Gastrocnemius medialis (tissue), 4 donors: ENCODE measurements at regions of chr11 and their contacts with region 1.

Region 1: GRCh38 chr11:47715082-47715669 is at the start of gene AGBL2:
- DNase-seq: peak; percentile 9 to 46
- ATAC-seq: peak in 1 of 2 donors; percentile 68
- H3K4me3 ChIP-seq: peak within 1 kb of the TSS; percentile 61 to 82 (median 72)
- H3K27ac ChIP-seq: peak within 1 kb of the TSS; percentile 8 to 65 (median 52)
- H3K4me1 ChIP-seq: peaks cover 0 to 4% of the 10 kb centered on the region in 2 donors
- H3K27me3 ChIP-seq: no peaks in the 10 kb centered on the region
- CTCF ChIP-seq: no peak
- POLR2A ChIP-seq: no peak
- total RNA-seq, gene AGBL2: not detected

Region 2: DNA sequence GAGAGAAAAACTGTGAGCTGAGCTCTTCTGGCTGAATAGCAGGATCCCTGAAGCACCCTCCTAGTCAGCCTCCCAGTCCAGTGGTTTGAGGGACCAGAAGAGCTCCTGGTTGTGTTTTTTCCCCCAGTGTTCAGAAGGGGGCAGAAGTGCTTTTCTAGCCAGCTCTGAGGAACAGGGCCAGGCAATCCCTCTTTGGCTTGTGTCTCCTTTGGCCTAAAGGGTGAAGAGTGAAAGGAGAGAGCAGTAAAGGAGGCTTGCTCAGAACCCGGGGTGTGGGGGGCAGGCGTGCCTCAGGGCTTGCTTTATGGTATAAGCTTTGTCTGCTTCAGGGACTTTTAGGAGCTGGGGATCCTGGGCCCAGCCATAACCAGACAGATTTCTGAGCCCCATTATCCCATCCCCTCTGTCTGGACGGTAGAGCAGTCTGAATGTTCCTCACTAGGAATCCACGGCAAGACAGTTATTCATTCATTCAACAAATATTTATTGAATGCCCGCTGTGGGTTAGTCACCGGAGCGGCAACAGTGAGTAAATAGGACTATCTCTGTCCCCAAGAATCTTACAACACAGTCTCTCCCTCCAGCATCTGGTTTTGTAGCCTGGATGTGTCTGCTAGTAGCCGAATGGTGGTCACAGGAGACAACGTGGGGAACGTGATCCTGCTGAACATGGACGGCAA is 481.0 kb before region 1 on chr11:
- in situ Hi-C with region 1: no loop called
- intact Hi-C with region 1: no loop called
- DNase-seq: peak in 1 of 2 donors; percentile 34
- ATAC-seq: peak; percentile 50 to 63
- H3K4me3 ChIP-seq: no peak overlapping the region
- H3K27ac ChIP-seq: peak overlapping the region in 2 of 4 donors; percentile 23 to 48
- H3K4me1 ChIP-seq: peaks cover 0 to 4% of the 10 kb centered on the region in 2 donors
- H3K27me3 ChIP-seq: no peaks in the 10 kb centered on the region
- CTCF ChIP-seq: peak in 3 of 5 experiments; percentile 14 to 28 (median 19)
- POLR2A ChIP-seq: no peak

Region 3: DNA sequence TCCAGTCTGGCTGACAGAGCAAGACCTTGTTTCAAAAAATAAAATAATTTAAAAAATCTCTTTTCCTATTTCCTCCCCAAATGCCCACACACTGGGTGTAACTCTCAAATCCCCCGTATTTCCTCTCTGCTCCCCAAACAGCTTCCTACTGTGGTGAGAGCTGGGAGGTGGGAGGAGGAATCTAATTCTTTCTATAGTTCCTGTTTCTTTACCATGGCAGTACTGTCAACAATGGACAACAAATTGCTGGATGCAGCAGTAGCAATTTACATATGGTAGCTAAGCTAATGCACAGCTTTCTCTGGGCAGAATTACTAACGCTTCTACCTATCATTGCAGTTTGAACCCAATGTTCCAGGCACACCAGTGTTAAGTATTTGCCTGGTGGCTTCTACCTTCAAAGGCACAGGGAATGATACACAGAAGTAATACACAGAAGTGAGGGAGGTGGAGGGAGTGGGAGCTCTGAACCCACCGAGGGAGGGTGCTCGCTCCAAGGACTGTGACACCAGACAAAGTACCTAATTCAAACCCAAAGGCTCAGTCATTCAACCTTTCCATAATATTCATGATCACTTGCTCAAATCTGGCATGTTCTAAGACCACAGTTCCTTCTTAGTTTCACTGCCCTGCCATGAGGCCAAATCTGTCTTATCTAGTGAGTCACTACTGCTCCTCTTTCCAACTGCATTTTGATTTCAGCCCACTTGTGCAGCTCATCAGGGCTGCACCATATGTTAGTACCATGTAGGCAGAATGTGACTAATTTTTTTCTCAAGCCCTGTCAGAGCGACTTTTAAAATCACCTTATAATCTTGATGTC is 200.1 kb before region 1 on chr11:
- in situ Hi-C with region 1: no loop called
- intact Hi-C with region 1: no loop called
- DNase-seq: no peak
- ATAC-seq: peak; percentile 75 to 82
- H3K4me3 ChIP-seq: no peak overlapping the region
- H3K27ac ChIP-seq: peak overlapping the region; percentile 87 to 94 (median 91)
- H3K4me1 ChIP-seq: peaks cover 75 to 99% of the 10 kb centered on the region in 2 donors
- H3K27me3 ChIP-seq: no peaks in the 10 kb centered on the region
- CTCF ChIP-seq: no peak
- POLR2A ChIP-seq: no peak

Region 4: DNA sequence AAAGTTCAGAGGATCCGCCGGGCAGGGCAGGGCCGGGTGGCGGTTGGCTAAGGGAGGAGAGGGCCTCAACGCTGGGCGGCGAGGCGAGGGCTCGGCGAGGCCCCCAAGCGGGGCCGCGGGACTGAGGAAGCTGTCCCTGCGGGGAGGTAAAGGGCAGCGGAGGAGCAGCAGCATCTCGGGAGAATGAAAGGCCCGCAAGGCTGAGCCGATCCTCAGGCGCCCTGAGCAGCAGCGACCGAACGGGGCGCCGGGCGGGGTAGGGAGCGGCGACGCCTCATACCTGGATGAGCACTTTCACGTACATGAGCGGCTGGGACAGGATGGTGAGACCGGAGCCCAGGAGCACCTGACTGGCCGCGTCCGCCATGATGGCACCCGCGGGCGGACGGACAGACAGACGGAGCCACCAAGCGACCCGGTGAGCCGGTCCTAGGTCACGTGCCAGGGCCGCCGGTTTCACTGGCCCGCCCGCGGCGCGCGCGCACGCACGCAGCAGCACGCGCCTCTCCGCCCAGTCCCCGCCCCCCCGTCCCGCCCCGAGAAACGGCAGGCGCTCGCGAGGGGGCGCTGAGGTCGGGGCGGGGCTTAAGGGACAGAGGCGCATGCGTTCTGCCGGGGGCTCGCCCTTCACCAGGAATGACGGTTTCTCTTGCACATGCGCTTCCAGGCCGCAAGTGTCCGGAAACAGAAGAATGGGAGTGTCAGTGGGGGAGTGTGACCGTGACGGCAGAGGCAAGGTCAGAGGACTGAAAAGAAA is 72.9 kb before region 1 on chr11 and contains the start of gene MTCH2:
- in situ Hi-C with region 1: no loop called
- intact Hi-C with region 1: loop called (anchors 5 kb)
- DNase-seq: peak; percentile 94 to 95
- ATAC-seq: peak; percentile 95 to 96
- H3K4me3 ChIP-seq: peak within 1 kb of the TSS; percentile 70 to 100 (median 88)
- H3K27ac ChIP-seq: peak within 1 kb of the TSS; percentile 89 to 100 (median 99)
- H3K4me1 ChIP-seq: peaks cover 20 to 22% of the 10 kb centered on the region in 2 donors
- H3K27me3 ChIP-seq: no peaks in the 10 kb centered on the region
- CTCF ChIP-seq: peak in 3 of 5 experiments; percentile 35 to 56 (median 49)
- POLR2A ChIP-seq: peak; percentile 86 to 88
- total RNA-seq, gene MTCH2: 70.3 to 139 (median 85.6) TPM